ENCODE measurements at regions of chr6 and their contacts with region 1.

Region 1: DNA sequence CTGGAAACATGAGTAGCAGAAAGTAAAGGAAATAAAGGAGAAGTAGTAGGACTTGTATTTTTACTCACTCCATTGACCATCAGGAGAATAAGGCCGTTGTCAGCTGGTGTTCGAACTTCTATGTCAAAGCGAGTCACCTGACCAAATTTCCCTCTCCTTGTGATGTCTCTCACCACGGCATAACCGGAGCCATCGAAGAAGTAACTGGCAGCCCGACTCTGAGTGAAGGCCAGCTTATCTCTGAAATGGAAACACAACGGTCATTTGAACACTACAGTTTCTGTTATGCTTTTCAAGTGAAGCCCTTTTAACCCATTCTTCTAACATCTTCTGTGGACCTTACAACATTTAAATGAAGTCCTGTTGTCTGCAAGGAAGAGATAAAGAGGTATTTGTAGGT is 51.7 kb downstream of the FAM229B start:
- DNase-seq: no peak
- ATAC-seq: no peak

Region 2: GRCh38 chr6:112076200-112076599 is 62.9 kb before region 1 on chr6:
- intact Hi-C with region 1: loop called in 1 of 2 experiments (anchors 10 kb)
- DNase-seq: no peak
- ATAC-seq: no peak

Measured in left cardiac atrium (tissue), 4 donors.